Activated CD4-positive, alpha-beta T cell treated with anti-CD3 and anti-CD28 coated beads for 36 hours (primary cell): ENCODE measurements at regions of chr1 and their contacts with region 1.

Region 1: GRCh38 chr1:211323156-211324063 is 3.2 kb upstream of the TRAF5 start:
- DNase-seq: peak; percentile 81
- ATAC-seq: peak; percentile 83
- H3K4me3 Mint-ChIP-seq: no peak overlapping the region
- H3K27ac Mint-ChIP-seq: peak overlapping the region; percentile 42
- H3K4me1 Mint-ChIP-seq: peaks cover 69% of the 10 kb centered on the region
- H3K27me3 Mint-ChIP-seq: no peaks in the 10 kb centered on the region

Region 2: DNA sequence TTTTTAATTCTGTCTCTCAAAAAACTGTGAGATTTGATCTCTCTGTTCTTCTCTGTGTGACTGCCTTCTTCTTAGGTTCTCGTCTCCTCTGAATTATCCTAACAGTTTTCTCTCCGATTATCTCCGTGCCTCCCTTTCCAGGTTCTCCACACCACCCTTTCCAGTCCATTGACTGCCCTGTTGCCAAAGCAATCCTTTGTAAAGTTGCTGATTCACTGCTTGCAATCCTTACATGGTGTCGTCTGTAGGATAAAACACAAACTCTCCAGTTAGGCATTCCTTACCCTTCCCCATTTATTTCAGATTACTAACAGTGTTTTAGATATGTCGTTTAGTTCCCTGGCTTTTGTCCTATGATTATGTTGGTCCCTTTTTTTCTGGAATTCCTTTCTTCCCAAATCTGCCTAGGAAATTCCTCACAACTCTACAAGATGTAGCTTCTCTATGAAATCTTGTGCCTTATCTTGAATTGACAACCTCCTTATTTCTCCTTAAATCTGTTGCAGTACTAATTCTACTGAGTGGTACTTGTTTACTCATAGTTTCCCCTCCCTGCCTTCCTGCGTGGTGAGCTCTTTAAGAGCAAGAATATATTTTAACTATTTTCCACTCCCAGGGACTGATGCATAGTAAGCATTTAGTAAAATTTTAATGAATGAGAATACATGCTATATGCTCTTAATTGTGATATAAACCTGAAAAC is 41.9 kb before region 1 on chr1:
- CTCF ChIA-PET with region 1: interaction called, 3 read pairs
- POLR2A ChIA-PET with region 1: interaction called, 3 read pairs
- intact Hi-C with region 1: loop called in 1 of 2 experiments (anchors 1 kb)
- DNase-seq: peak; percentile 24
- ATAC-seq: peak; percentile 47
- H3K4me3 Mint-ChIP-seq: no peak overlapping the region
- H3K27ac Mint-ChIP-seq: no peak overlapping the region
- H3K4me1 Mint-ChIP-seq: peaks cover 3% of the 10 kb centered on the region
- H3K27me3 Mint-ChIP-seq: no peaks in the 10 kb centered on the region

Region 3: DNA sequence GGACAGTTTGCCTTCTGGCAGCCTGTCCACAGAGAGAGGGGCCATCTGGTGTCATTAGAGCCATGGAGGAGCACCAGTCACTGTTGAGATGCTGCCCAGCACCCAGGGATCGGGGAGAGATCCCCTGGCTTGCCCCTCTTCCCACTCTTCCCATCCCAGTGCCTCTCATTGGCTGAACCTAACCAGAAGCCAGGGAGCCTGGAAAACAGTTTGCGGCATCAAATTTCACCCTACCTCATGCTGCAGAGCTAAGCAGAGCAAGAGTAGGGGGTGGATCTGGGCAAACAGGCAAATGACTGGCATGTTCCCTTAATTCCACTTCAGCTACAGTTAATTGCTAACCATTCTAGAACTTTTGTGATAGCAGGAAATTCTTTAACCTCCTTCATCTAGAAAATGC is 22.3 kb after region 1 on chr1:
- CTCF ChIA-PET with region 1: interaction called, 30 read pairs
- POLR2A ChIA-PET with region 1: interaction called, 5 read pairs
- intact Hi-C with region 1: no loop called
- DNase-seq: no peak
- ATAC-seq: no peak
- H3K4me3 Mint-ChIP-seq: no peak overlapping the region
- H3K27ac Mint-ChIP-seq: peak overlapping the region; percentile 57
- H3K4me1 Mint-ChIP-seq: peaks cover 85% of the 10 kb centered on the region
- H3K27me3 Mint-ChIP-seq: no peaks in the 10 kb centered on the region

Region 4: DNA sequence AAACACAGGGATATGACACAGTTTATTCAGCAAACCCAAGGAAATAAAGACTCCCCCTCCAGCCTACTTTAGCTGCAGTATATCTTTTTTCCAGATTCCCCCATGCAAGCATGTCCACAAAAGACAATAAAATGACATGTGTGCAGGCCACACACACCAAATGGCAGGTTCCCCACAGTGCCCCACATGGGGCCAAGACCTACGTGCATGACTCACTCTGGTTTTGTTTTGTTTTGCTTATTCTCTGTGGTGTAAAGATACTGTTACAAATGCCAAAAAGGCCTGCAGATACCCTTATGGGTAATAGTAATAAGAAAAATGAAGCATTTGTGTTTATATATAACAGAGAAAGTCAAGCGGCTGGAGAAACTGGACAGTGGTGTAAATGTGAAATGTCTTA is 97.0 kb after region 1 on chr1:
- CTCF ChIA-PET with region 1: no interaction called
- POLR2A ChIA-PET with region 1: no interaction called
- intact Hi-C with region 1: loop called (anchors 1 to 5 kb)
- DNase-seq: peak; percentile 44
- ATAC-seq: peak; percentile 36
- H3K4me3 Mint-ChIP-seq: no peak overlapping the region
- H3K27ac Mint-ChIP-seq: no peak overlapping the region
- H3K4me1 Mint-ChIP-seq: peaks cover 23% of the 10 kb centered on the region
- H3K27me3 Mint-ChIP-seq: no peaks in the 10 kb centered on the region

Region 5: DNA sequence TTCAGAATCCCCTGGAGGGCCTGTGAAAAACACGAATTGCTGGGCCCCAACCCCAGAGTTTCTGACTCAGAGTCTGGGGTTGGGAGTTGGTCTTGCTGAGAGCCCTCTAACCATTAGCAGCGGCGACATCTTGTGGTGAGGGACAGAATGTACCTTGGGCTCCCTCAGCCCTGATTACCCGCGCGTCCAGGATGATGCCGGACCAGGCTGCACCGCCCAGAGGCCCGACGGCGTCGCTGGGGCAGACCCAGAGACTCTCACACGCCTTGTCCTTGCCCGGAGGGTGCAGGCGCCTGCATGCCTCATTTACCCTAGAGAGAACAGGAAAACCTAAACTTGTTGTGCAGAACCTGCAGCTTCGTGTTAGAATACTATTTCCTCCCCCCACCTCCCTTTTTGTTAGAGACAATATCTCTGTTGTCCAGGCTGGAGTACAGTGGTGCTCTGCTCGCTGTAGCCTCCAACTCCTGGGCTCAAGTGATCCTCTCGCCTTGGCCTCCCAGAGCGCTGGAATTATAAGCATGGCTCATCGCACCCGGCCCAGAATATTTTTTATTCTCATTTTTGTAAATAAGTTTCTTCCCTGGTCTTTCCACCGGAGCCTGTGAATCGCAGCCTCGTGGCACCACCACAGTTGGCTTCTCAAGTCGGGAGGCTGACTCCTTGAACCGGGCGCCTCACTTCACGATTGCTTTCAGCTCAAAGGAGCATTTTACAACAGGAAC is 190.8 kb after region 1 on chr1:
- CTCF ChIA-PET with region 1: interaction called, 17 read pairs
- POLR2A ChIA-PET with region 1: interaction called, 3 read pairs
- intact Hi-C with region 1: loop called (anchors 1 kb)
- DNase-seq: peak; percentile 91
- ATAC-seq: peak; percentile 85
- H3K4me3 Mint-ChIP-seq: peak overlapping the region; percentile 28
- H3K27ac Mint-ChIP-seq: no peak overlapping the region
- H3K4me1 Mint-ChIP-seq: peaks cover 22% of the 10 kb centered on the region
- H3K27me3 Mint-ChIP-seq: peaks cover 2% of the 10 kb centered on the region

Region 6: DNA sequence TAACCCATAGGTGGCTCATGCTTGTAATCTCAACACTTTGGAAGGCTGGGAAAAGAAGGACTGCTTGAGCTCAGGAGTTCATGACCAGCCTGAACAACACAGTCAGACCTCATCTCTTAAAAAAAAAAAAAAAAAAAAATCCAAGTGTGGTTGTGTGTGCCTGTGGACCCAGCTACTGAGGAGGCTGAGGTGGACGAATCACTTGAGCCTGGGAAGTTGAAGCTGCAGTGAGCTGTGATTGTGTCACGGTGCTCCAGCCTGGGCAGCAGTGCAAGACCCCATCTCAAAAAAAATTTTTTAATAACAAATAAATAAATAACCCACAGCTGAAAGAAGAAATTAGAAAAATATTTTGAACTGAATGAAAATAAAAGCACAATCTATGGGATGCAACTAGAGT is 698.2 kb after region 1 on chr1:
- CTCF ChIA-PET with region 1: no interaction called
- POLR2A ChIA-PET with region 1: no interaction called
- intact Hi-C with region 1: no loop called
- DNase-seq: no peak
- ATAC-seq: no peak
- H3K4me3 Mint-ChIP-seq: no peak overlapping the region
- H3K27ac Mint-ChIP-seq: no peak overlapping the region
- H3K4me1 Mint-ChIP-seq: peaks cover 9% of the 10 kb centered on the region
- H3K27me3 Mint-ChIP-seq: no peaks in the 10 kb centered on the region